Ascending aorta (tissue), 2 donors: ENCODE measurements at regions of chr3 and their contacts with region 1.

Region 1: GRCh38 chr3:21752749-21753347 is 1.8 kb upstream of the ZNF385D start:
- DNase-seq: no peak
- H3K4me3 ChIP-seq: no peak overlapping the region
- H3K27ac ChIP-seq: no peak overlapping the region
- H3K4me1 ChIP-seq: peaks cover 0 to 4% of the 10 kb centered on the region in 2 donors
- H3K27me3 ChIP-seq: no peaks in the 10 kb centered on the region
- CTCF ChIP-seq: peak; percentile 59 to 71 (median 71)

Region 2: GRCh38 chr3:20185701-20186598 is 1566.9 kb before region 1 on chr3 and contains the start of gene SGO1:
- intact Hi-C with region 1: loop called (anchors 10 kb)
- DNase-seq: peak; percentile 99 to 100
- H3K4me3 ChIP-seq: peak within 1 kb of the TSS; percentile 70 to 85
- H3K27ac ChIP-seq: peak within 1 kb of the TSS; percentile 91 to 94
- H3K4me1 ChIP-seq: peaks cover 0 to 6% of the 10 kb centered on the region in 2 donors
- H3K27me3 ChIP-seq: no peaks in the 10 kb centered on the region
- CTCF ChIP-seq: no peak
- total RNA-seq, gene SGO1: not detected

Region 3: DNA sequence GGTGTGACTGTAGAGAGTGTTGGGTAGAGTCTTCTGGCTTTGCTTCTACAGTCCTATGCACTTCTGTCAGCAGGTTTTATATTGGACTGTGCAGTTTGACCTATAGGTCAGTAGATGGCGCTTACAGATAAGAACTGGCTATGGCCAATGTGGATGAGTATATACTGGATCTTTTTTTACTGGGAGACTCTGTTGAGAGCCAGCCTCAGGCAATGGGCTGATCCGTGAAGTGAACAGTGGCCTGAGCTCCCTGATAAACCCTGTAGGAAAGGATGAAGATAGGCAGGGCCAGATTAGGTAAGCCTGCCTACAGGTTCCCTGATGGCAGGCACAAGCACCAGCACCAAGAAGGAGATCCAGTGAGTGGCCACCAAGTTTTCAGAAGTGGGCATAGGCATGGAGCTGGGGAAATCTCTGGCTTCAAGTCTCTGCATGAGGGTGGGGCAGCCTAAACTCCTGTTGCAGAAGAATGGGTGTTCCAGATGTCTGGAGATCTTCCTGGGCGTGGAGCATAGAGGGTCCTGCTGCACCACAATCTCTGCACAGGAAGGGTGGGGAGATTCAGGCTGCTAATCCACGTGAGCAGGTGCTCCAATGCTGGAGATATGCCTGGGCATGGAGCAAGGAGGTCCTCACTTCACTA is 1240.9 kb before region 1 on chr3:
- intact Hi-C with region 1: loop called (anchors 10 kb)
- DNase-seq: no peak
- H3K4me3 ChIP-seq: no peak overlapping the region
- H3K27ac ChIP-seq: no peak overlapping the region
- H3K4me1 ChIP-seq: no peaks in the 10 kb centered on the region
- H3K27me3 ChIP-seq: no peaks in the 10 kb centered on the region
- CTCF ChIP-seq: peak; percentile 40 to 64 (median 50)

Region 4: GRCh38 chr3:21433751-21434150 is 319.1 kb before region 1 on chr3:
- intact Hi-C with region 1: no loop called
- DNase-seq: no peak
- H3K4me3 ChIP-seq: no peak overlapping the region
- H3K27ac ChIP-seq: no peak overlapping the region
- H3K4me1 ChIP-seq: no peaks in the 10 kb centered on the region
- H3K27me3 ChIP-seq: no peaks in the 10 kb centered on the region
- CTCF ChIP-seq: no peak

Region 5: GRCh38 chr3:21520106-21520963 is 232.5 kb before region 1 on chr3:
- intact Hi-C with region 1: no loop called
- DNase-seq: no peak
- H3K4me3 ChIP-seq: no peak overlapping the region
- H3K27ac ChIP-seq: no peak overlapping the region
- H3K4me1 ChIP-seq: peaks cover 0 to 2% of the 10 kb centered on the region in 2 donors
- H3K27me3 ChIP-seq: no peaks in the 10 kb centered on the region
- CTCF ChIP-seq: no peak

Region 6: DNA sequence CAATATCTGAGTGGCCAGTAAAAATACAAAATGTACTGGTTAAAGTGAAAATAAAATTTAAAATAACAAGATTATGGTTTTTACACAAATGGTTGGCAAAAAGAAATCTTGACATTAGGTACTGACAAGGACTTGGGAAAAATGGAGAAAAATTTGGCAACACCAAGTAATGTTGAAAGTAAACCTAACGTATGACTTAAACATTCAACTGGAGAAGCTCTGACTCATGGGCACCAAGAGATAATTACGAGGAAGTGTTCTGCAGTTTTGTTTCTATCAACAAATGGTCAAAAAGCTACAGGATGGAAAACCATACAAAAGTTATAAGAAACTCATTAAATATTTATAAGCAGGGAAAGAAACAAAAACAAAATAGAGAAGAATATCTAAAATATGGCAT is 179.6 kb before region 1 on chr3:
- intact Hi-C with region 1: loop called (anchors 5 kb)
- DNase-seq: no peak
- H3K4me3 ChIP-seq: no peak overlapping the region
- H3K27ac ChIP-seq: no peak overlapping the region
- H3K4me1 ChIP-seq: no peaks in the 10 kb centered on the region
- H3K27me3 ChIP-seq: no peaks in the 10 kb centered on the region
- CTCF ChIP-seq: no peak

Region 7: DNA sequence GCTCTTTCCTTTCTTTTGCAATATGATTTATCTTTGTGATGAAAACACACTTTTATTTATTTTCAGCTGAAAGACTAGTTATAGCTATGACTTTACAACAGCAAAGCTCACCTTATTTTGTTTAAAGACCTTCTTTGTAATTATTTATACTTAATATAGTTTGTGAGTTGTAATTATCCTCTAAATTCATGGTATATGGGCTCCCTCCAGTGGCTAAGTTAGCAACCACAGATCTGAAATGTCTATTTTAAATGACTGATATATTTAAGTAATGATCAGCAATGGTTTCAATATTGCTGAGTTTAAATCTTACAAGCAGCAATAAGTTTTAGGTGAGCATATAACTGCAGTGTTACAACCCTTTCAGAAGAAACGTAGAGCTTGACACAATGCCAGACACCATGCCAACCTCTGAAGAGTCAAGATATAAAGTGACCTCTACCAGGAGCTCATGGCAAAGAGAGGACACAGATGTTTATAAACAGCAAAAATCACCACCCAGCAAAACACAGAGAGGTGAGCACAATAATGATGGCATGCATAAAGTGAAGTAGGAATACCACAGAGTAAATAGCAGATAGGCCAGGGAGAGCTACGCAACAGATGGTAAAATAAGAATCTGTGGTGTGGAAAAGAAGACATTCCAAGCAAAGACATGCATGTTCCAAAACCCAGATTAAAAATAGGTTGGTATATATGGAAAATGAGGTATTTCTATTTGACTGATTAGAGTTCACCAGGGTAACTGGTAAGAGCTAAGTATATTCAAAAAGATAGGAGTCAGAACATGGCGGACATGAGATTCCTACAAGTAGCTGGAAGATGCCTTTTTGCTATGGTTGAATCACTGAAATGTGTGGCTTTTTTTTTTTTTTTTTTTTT is 141.9 kb after region 1 on chr3:
- intact Hi-C with region 1: loop called (anchors 1 kb)
- DNase-seq: no peak
- H3K4me3 ChIP-seq: no peak overlapping the region
- H3K27ac ChIP-seq: no peak overlapping the region
- H3K4me1 ChIP-seq: peaks cover 0 to 3% of the 10 kb centered on the region in 2 donors
- H3K27me3 ChIP-seq: no peaks in the 10 kb centered on the region
- CTCF ChIP-seq: peak in 2 of 3 experiments; percentile 65 to 75

Region 8: GRCh38 chr3:22117751-22118346 is 365.0 kb after region 1 on chr3:
- intact Hi-C with region 1: loop called (anchors 5 kb)
- DNase-seq: no peak
- H3K4me3 ChIP-seq: no peak overlapping the region
- H3K27ac ChIP-seq: no peak overlapping the region
- H3K4me1 ChIP-seq: no peaks in the 10 kb centered on the region
- H3K27me3 ChIP-seq: no peaks in the 10 kb centered on the region
- CTCF ChIP-seq: peak; percentile 33 to 61 (median 51)